Aorta (tissue), 5 donors: ENCODE measurements at regions of chr5 and their contacts with region 1.

Region 1: GRCh38 chr5:21791304-21791703 is 1061.8 kb downstream of the CDH12 start:
- DNase-seq: no peak
- ATAC-seq: no peak
- H3K4me3 ChIP-seq: no peak overlapping the region
- H3K27ac ChIP-seq: no peak overlapping the region
- H3K4me1 ChIP-seq: no peaks in the 10 kb centered on the region
- H3K27me3 ChIP-seq: no peaks in the 10 kb centered on the region

Region 2: DNA sequence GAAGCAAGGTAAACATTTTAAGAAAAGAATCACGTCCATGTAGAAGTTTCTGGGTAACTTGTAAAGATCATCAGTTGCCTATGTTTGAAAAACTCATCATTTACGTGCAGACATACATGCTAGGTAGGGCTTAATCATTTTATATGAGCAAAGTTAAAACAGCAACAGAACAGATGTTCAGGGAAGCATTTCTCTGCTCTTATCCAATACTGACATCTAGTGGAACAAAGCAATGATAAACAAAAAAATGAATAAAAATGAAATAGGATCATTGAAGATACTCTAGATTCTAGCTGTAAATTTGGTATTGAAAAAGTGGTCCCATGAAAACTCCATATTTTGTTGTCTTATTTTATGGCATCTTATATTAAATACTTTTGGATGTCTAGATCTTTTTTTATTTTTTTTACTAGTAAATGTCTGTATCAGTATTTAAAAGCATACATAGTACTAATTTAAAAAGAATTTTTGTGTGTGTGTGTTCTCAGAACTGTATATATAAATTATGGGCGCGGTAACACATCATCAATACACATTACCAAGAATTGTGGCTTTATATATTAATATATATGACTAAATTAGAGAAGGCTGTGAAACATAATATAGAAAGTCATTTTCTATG is 11.7 kb after region 1 on chr5:
- intact Hi-C with region 1: loop called in 1 of 2 experiments (anchors 1 kb)
- DNase-seq: no peak
- ATAC-seq: no peak
- H3K4me3 ChIP-seq: no peak overlapping the region
- H3K27ac ChIP-seq: no peak overlapping the region
- H3K4me1 ChIP-seq: no peaks in the 10 kb centered on the region
- H3K27me3 ChIP-seq: no peaks in the 10 kb centered on the region